ENCODE measurements at regions of chr6 and their contacts with region 1.

Region 1: DNA sequence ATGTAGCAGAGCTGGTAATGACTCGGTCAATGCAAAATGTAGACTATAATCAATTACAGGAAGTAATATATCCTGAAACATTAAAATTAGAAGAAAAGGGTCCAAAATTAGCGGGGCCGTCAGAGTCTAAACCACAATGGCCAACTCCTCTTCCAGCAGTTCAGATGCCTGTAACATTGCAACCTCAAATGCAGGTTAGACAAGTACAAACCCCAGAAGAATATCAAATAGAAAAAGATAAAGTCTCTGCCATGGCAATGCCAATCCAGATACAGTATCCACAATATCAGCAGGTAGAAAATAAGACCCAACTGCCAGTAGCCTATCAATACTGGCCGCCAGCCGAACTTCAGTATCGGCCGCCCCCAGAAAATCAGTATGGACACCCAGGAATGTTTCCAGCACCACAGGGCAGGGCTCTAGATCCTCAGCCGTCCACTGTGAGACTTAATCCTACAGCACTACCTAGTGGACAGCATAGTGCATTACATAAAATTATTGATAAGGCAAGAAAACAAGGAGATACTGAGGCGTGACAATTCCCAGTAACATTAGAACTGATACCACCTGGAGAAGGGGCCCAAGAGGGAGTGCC is 158.4 kb downstream of the GPX5 start:
- DNase-seq: peak; percentile 76
- H3K4me3 ChIP-seq: peak overlapping the region; percentile 8
- H3K27ac ChIP-seq: no peak overlapping the region
- H3K4me1 ChIP-seq: peaks cover 9% of the 10 kb centered on the region
- H3K27me3 ChIP-seq: no peaks in the 10 kb centered on the region
- CTCF ChIP-seq: peak; percentile 70

Region 2: DNA sequence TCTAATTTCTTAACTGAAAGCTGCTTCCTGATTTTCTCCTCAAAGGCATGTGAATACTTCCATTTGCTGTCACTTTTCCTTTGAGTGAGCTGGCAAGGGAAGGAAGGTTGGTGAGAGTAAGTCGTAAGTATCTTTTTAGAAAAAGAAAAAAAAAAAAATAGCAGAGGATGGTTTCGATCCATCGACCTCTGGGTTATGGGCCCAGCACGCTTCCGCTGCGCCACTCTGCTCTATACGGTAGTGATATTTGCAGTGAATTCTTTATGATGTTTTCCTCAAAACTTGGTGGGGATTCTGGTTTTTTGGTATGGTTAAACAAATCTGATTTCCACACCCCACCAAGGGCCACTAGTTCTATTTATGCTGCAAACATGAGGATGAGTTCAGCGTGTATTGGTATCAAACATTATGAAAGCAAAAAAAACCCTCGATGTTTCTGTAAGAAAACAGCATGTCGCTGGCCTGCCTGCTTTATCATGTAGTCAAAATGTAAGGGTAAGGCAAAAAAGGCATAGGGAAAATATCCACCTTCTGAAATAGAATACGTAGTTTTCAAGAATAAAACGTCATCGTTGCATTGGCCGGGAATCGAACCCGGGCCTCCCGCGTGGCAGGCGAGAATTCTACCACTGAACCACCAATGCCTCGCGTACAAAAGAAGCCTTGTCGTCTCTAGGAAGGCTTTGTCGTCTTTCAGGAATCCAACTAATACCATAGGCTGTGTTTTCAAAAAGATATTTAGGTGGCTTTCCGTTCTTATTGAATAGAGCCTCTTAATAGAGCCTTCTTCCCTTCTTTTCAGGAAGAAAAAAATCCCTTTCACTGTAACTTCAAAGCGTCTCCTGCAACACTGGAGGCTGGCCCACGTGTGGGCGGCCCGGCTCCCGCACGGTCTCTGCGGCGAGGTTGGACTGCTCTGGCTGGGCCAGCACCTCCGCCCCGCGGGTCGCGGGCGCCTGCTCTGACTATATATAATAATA is 781.4 kb before region 1 on chr6:
- CTCF ChIA-PET with region 1: no interaction called
- POLR2A ChIA-PET with region 1: no interaction called
- intact Hi-C with region 1: loop called (anchors 10 kb)
- DNase-seq: peak; percentile 88
- H3K4me3 ChIP-seq: peak overlapping the region; percentile 82
- H3K27ac ChIP-seq: peak overlapping the region; percentile 87
- H3K4me1 ChIP-seq: no peaks in the 10 kb centered on the region
- H3K27me3 ChIP-seq: no peaks in the 10 kb centered on the region
- CTCF ChIP-seq: no peak

Region 3: GRCh38 chr6:28393911-28394662 is 290.0 kb before region 1 on chr6:
- CTCF ChIA-PET with region 1: no interaction called
- POLR2A ChIA-PET with region 1: no interaction called
- intact Hi-C with region 1: loop called (anchors 5 kb)
- DNase-seq: peak; percentile 39
- H3K4me3 ChIP-seq: no peak overlapping the region
- H3K27ac ChIP-seq: no peak overlapping the region
- H3K4me1 ChIP-seq: peaks cover 12% of the 10 kb centered on the region
- H3K27me3 ChIP-seq: no peaks in the 10 kb centered on the region
- CTCF ChIP-seq: peak; percentile 53

Region 4: GRCh38 chr6:28542440-28543296 is 141.4 kb before region 1 on chr6:
- CTCF ChIA-PET with region 1: no interaction called
- POLR2A ChIA-PET with region 1: no interaction called
- intact Hi-C with region 1: loop called (anchors 5 kb)
- DNase-seq: peak; percentile 90
- H3K4me3 ChIP-seq: peak overlapping the region; percentile 39
- H3K27ac ChIP-seq: no peak overlapping the region
- H3K4me1 ChIP-seq: peaks cover 3% of the 10 kb centered on the region
- H3K27me3 ChIP-seq: peaks cover 2% of the 10 kb centered on the region
- CTCF ChIP-seq: peak; percentile 58

Region 5: GRCh38 chr6:29016559-29017427 is 332.8 kb after region 1 on chr6:
- CTCF ChIA-PET with region 1: interaction called, 3 read pairs
- POLR2A ChIA-PET with region 1: no interaction called
- intact Hi-C with region 1: loop called (anchors 1 kb)
- DNase-seq: peak; percentile 84
- H3K4me3 ChIP-seq: peak overlapping the region; percentile 54
- H3K27ac ChIP-seq: no peak overlapping the region
- H3K4me1 ChIP-seq: no peaks in the 10 kb centered on the region
- H3K27me3 ChIP-seq: no peaks in the 10 kb centered on the region
- CTCF ChIP-seq: peak; percentile 84

Measured in A673 (cell line).